Dendritic cell treated with granulocyte-macrophage colony-stimulating factor and Interleukin-4, amounts not matched to agents 40 ng/mL and 50 ng/mL, for 4 days (primary cell): ENCODE measurements at regions of chr7 and their contacts with region 1.

Region 1: DNA sequence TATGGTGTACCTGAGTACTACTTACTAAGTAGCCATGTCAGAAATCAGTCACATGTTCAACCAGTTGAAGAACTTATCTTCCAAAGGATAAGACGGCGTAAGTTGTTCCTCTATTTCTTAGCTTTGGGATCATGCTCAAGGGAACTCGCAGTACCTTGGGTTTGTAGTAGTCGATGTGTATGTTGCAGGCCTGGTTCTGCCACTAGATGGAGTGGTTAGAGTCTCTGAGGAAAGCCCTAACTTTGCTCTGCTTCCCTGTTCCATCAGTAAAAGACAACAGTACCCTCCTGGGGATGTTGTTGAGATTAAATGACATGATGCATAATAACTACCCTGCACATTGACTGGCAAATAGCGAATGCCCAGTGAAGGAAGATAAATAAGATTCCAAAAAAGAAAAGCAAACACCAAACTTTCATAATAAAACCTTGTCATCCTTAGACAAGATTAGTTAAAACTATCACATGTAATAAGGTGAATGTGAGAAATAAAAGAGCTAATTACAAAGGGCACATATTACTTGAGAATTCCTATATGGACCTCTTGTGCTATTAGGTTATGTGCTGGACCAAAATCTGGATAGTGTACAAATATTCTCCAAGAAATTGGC is 165.9 kb downstream of the ABCA13 start:
- H3K4me3 Mint-ChIP-seq: no peak overlapping the region
- H3K27ac Mint-ChIP-seq: no peak overlapping the region
- H3K4me1 Mint-ChIP-seq: no peaks in the 10 kb centered on the region
- H3K27me3 Mint-ChIP-seq: no peaks in the 10 kb centered on the region

Region 2: GRCh38 chr7:48528646-48529045 is 191.5 kb after region 1 on chr7:
- intact Hi-C with region 1: no loop called
- H3K4me3 Mint-ChIP-seq: no peak overlapping the region
- H3K27ac Mint-ChIP-seq: no peak overlapping the region
- H3K4me1 Mint-ChIP-seq: no peaks in the 10 kb centered on the region
- H3K27me3 Mint-ChIP-seq: no peaks in the 10 kb centered on the region

Region 3: GRCh38 chr7:48875045-48875916 is 538.2 kb after region 1 on chr7:
- intact Hi-C with region 1: loop called (anchors 1 kb)
- H3K4me3 Mint-ChIP-seq: no peak overlapping the region
- H3K27ac Mint-ChIP-seq: no peak overlapping the region
- H3K4me1 Mint-ChIP-seq: peaks cover 3% of the 10 kb centered on the region
- H3K27me3 Mint-ChIP-seq: peaks cover 6% of the 10 kb centered on the region